Activated CD4-positive, alpha-beta T cell treated with anti-CD3 and anti-CD28 coated beads for 36 hours (primary cell): ENCODE measurements at regions of chr5 and their contacts with region 1.

Region 1: GRCh38 chr5:43556857-43557542 is at the start of gene PAIP1:
- DNase-seq: peak; percentile 91
- ATAC-seq: peak; percentile 87
- H3K4me3 Mint-ChIP-seq: peak within 1 kb of the TSS; percentile 88
- H3K27ac Mint-ChIP-seq: peak within 1 kb of the TSS; percentile 99
- H3K4me1 Mint-ChIP-seq: peaks cover 18% of the 10 kb centered on the region
- H3K27me3 Mint-ChIP-seq: peaks cover 2% of the 10 kb centered on the region
- total RNA-seq, gene PAIP1: 51.7 to 55.1 TPM

Region 2: DNA sequence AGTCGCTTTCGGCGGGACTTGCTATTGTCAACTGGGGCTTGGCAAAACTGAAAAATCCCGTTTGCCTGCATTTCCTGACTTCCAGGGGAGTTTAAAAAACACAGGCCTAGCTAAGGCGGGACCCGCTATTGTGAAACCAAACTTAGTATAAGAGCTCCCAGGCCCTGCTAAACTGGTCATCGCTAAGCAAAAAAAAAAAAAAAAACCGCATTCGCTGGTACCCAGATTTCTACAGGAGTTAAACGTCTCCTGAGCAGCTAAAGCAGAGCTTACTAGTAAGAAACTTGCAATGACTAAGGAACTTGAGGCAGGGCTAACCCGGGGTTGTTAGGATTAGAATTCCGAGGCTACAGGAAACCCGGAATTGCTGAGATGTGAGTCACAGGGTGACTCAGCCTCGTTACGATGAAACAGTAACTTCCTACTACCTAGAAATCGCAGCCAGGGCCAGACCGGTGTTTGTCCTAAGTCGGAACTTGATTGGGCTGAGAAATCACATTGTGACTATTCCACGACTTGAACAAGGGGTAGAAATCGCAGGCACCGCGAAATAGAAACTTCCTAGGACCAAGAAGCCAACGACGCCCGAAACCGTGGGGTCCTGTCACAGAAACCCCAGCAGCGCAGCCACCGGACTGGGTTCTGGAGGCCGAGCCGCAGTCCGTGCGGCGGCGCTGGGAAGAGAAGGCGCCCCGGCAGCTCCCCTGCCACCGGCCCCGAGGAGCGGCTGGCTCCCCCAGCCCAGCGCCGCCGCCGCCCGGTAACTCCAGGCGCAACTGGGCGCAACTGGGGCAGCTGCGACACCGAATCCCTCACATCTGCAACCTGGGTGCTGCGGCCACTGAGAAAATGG is 606.3 kb before region 1 on chr5:
- CTCF ChIA-PET with region 1: no interaction called
- POLR2A ChIA-PET with region 1: no interaction called
- intact Hi-C with region 1: loop called in 1 of 2 experiments (anchors 2 kb)
- DNase-seq: peak; percentile 82
- ATAC-seq: peak; percentile 59
- H3K4me3 Mint-ChIP-seq: peak overlapping the region; percentile 83
- H3K27ac Mint-ChIP-seq: peak overlapping the region; percentile 91
- H3K4me1 Mint-ChIP-seq: peaks cover 17% of the 10 kb centered on the region
- H3K27me3 Mint-ChIP-seq: no peaks in the 10 kb centered on the region

Region 3: GRCh38 chr5:42985129-42986037 is 571.6 kb before region 1 on chr5:
- CTCF ChIA-PET with region 1: no interaction called
- POLR2A ChIA-PET with region 1: no interaction called
- intact Hi-C with region 1: no loop called
- DNase-seq: no peak
- ATAC-seq: no peak
- H3K4me3 Mint-ChIP-seq: no peak overlapping the region
- H3K27ac Mint-ChIP-seq: peak overlapping the region; percentile 37
- H3K4me1 Mint-ChIP-seq: peaks cover 40% of the 10 kb centered on the region
- H3K27me3 Mint-ChIP-seq: no peaks in the 10 kb centered on the region

Region 4: GRCh38 chr5:43019614-43020293 is 537.2 kb before region 1 on chr5:
- CTCF ChIA-PET with region 1: no interaction called
- POLR2A ChIA-PET with region 1: no interaction called
- intact Hi-C with region 1: loop called in 1 of 2 experiments (anchors 2 kb)
- DNase-seq: peak; percentile 91
- ATAC-seq: peak; percentile 70
- H3K4me3 Mint-ChIP-seq: peak overlapping the region; percentile 94
- H3K27ac Mint-ChIP-seq: peak overlapping the region; percentile 99
- H3K4me1 Mint-ChIP-seq: peaks cover 33% of the 10 kb centered on the region
- H3K27me3 Mint-ChIP-seq: no peaks in the 10 kb centered on the region

Region 5: GRCh38 chr5:43105369-43106289 is 451.4 kb before region 1 on chr5:
- CTCF ChIA-PET with region 1: no interaction called
- POLR2A ChIA-PET with region 1: no interaction called
- intact Hi-C with region 1: loop called in 1 of 2 experiments (anchors 1 kb)
- DNase-seq: peak; percentile 93
- ATAC-seq: peak; percentile 91
- H3K4me3 Mint-ChIP-seq: peak overlapping the region; percentile 71
- H3K27ac Mint-ChIP-seq: peak overlapping the region; percentile 91
- H3K4me1 Mint-ChIP-seq: peaks cover 43% of the 10 kb centered on the region
- H3K27me3 Mint-ChIP-seq: no peaks in the 10 kb centered on the region

Region 6: DNA sequence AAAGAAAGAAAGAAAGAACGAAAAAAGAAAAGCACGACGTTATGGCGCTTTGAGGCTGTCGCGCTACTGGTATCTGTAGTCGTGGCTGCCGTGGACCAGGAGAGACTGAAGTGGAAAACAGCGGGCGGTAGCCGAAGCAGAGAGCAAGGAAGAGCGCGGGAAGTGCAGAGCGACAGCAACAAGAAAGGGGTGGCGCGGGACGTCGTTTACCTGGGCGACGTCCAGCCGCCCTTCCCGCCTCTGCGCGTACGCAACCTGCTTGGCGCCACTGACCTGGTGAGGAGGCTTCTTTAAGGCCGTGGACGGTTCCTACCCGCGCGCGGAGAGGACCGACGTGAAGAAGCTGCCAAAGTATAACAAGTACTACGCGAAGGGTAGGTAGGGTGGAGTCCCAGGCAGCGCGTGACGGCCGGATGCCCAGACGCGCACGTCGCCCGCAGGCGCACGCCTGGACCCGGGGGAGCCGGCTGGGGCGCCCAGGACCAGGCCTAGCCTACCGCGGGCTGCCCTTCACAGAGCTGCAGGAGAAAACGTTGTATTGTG is 160.2 kb before region 1 on chr5:
- CTCF ChIA-PET with region 1: no interaction called
- POLR2A ChIA-PET with region 1: no interaction called
- intact Hi-C with region 1: loop called in 1 of 2 experiments (anchors 5 kb)
- DNase-seq: peak; percentile 82
- ATAC-seq: peak; percentile 97
- H3K4me3 Mint-ChIP-seq: peak overlapping the region; percentile 84
- H3K27ac Mint-ChIP-seq: peak overlapping the region; percentile 96
- H3K4me1 Mint-ChIP-seq: peaks cover 26% of the 10 kb centered on the region
- H3K27me3 Mint-ChIP-seq: no peaks in the 10 kb centered on the region

Region 7: DNA sequence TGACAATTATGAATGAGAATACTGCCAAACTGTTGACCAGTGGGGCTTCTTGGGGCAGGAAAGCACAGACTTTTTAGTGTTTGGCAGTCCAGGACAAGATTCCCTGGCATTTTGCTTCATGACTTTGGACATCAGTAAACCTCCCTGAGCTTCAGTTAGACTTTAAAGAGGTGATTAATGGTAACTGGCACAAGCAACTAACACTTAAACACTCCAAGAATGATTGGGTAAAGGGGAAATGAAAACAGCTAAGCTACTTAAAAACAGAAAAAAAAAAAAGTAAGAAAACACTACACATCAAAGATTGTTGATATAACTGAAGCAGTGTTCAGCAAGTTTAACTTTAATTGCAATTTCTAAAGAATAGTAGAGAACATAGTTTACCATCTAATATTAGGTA is 13.6 kb before region 1 on chr5:
- CTCF ChIA-PET with region 1: interaction called, 24 read pairs
- POLR2A ChIA-PET with region 1: no interaction called
- intact Hi-C with region 1: no loop called
- DNase-seq: no peak
- ATAC-seq: no peak
- H3K4me3 Mint-ChIP-seq: no peak overlapping the region
- H3K27ac Mint-ChIP-seq: no peak overlapping the region
- H3K4me1 Mint-ChIP-seq: peaks cover 15% of the 10 kb centered on the region
- H3K27me3 Mint-ChIP-seq: no peaks in the 10 kb centered on the region

Region 8: DNA sequence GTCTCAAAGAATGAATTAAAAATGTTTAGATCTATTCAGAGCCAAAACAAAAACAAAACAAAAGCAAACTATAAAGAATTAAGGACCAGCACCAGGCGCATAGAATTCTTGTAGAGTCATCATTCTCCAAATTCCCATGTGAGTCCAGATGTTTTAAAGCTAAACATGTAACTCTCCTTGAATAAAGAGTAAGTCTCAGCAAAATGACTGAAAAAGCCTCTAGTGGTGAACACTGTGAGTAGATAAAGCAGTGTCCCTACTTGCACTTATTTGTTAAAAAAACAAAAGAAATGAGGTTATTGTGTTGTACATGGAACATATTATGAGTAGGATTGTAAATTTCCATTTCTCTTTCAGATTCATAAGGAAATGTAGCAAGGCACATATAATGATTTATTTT is 90.0 kb after region 1 on chr5:
- CTCF ChIA-PET with region 1: no interaction called
- POLR2A ChIA-PET with region 1: no interaction called
- intact Hi-C with region 1: no loop called
- DNase-seq: no peak
- ATAC-seq: no peak
- H3K4me3 Mint-ChIP-seq: no peak overlapping the region
- H3K27ac Mint-ChIP-seq: no peak overlapping the region
- H3K4me1 Mint-ChIP-seq: no peaks in the 10 kb centered on the region
- H3K27me3 Mint-ChIP-seq: no peaks in the 10 kb centered on the region

Region 9: DNA sequence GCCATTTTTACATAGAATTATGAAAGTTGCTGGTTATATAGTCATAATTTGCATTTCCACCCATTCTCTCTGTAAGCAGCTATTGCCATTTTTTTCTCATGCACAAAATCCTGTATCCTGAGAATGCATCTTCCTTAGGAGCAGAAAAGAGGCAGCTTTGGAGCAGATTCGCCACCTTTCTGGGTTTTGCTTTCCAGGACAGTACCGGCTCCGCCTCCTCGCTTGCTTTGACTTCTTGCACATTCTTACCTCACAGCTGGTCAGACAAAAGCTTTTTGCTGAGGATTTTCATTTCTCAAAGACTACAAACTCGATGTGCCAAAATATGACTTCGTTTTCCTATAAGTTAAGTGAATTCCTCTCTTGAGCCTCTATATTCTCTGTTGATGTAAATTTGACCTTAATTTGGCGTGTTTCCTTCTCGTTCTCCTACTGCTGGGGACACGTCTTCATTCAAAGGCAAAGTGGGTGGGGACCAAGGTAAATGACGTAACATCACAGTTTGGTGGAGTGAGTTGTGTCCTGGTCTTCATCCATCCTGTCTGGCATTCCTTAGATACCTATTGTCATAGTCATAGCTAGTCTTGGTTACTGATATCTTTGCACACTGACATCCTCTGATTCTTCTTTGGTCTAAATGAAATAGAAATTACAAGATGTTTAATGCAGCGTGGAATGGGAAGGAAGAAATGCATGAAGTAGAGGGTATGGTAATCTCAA is 154.3 kb after region 1 on chr5:
- CTCF ChIA-PET with region 1: no interaction called
- POLR2A ChIA-PET with region 1: no interaction called
- intact Hi-C with region 1: no loop called
- DNase-seq: no peak
- ATAC-seq: no peak
- H3K4me3 Mint-ChIP-seq: no peak overlapping the region
- H3K27ac Mint-ChIP-seq: no peak overlapping the region
- H3K4me1 Mint-ChIP-seq: no peaks in the 10 kb centered on the region
- H3K27me3 Mint-ChIP-seq: no peaks in the 10 kb centered on the region

Region 10: DNA sequence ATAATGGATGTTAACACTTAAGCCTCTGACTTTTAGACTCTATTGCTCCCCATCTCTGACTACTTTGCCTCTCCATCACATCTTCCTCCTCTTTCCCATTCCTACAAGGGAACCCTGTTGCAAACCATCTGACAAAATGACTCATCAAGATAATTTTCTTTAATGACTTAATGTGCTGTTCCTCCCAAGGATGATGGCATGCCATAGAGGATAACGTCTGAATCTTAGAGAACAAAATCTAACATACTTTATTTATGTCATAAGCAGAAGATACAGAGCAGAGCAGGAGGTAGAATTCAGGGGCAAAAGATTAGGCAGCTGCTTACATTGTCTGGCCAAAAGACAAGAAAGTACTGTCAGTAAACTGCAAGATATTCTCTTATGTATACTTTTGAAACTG is 755.4 kb after region 1 on chr5:
- CTCF ChIA-PET with region 1: no interaction called
- POLR2A ChIA-PET with region 1: no interaction called
- intact Hi-C with region 1: no loop called
- DNase-seq: no peak
- ATAC-seq: no peak
- H3K4me3 Mint-ChIP-seq: no peak overlapping the region
- H3K27ac Mint-ChIP-seq: no peak overlapping the region
- H3K4me1 Mint-ChIP-seq: no peaks in the 10 kb centered on the region
- H3K27me3 Mint-ChIP-seq: no peaks in the 10 kb centered on the region

Region 11: GRCh38 chr5:44808435-44809214 is 1251.6 kb after region 1 on chr5 and contains the start of gene MRPS30:
- CTCF ChIA-PET with region 1: no interaction called
- POLR2A ChIA-PET with region 1: no interaction called
- intact Hi-C with region 1: loop called in 1 of 2 experiments (anchors 1 kb)
- DNase-seq: peak; percentile 93
- ATAC-seq: peak; percentile 96
- H3K4me3 Mint-ChIP-seq: peak within 1 kb of the TSS; percentile 91
- H3K27ac Mint-ChIP-seq: peak within 1 kb of the TSS; percentile 98
- H3K4me1 Mint-ChIP-seq: peaks cover 27% of the 10 kb centered on the region
- H3K27me3 Mint-ChIP-seq: no peaks in the 10 kb centered on the region
- total RNA-seq, gene MRPS30: 59.7 to 73.3 TPM